Endothelial cell of umbilical vein (primary cell): ENCODE measurements at regions of chr19 and their contacts with region 1.

Region 1: GRCh38 chr19:771332-771785 is 20.4 kb downstream of the MISP start:
- DNase-seq: peak; percentile 49
- H3K4me3 ChIP-seq: no peak overlapping the region
- H3K27ac ChIP-seq: no peak overlapping the region
- H3K4me1 ChIP-seq: no peaks in the 10 kb centered on the region
- H3K27me3 ChIP-seq: no peaks in the 10 kb centered on the region
- CTCF ChIP-seq: peak; percentile 52 to 71
- POLR2A ChIP-seq: no peak

Region 2: DNA sequence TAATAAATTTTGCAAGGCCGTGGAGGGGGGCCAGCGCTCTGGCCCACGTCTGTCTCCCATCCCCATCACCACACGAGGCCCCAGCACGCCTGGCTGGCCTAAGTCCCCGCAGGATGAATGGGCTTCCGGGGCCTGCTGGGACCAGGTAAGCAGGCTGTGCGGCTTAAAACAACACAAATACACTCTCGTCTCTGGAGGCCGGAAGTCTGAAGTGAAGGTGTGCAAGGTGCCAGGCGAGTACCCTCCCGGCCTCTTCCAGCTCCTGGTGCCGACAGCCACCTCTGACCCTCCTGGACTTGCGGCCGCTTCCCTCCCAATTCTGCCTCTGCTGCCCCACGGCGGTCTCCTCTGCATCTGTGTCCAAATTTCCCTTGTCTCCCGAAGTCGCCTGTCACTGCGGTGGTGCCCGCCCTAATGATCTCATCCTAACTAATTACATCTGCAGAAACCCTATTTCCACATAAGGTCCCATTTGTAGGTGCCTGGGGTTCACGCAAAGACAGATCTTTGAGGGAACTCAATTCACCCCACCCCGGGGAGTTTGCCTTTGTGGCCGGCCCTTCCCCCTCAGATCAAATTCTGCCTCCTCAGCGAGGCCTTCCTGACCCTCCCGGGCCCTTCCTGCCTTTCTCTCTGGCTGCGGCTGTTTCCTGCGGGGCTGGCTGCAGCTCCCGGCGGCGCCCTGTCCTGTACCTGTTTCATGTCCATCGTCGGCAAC is 17.8 kb after region 1 on chr19:
- CTCF ChIA-PET with region 1: interaction called, 9 read pairs
- POLR2A ChIA-PET with region 1: no interaction called
- dilution Hi-C with region 1: no loop called
- intact Hi-C with region 1: loop called (anchors 2 kb)
- DNase-seq: peak; percentile 69
- H3K4me3 ChIP-seq: peak overlapping the region in 1 of 3 experiments; percentile 10
- H3K27ac ChIP-seq: peak overlapping the region; percentile 80
- H3K4me1 ChIP-seq: peaks cover 33% of the 10 kb centered on the region
- H3K27me3 ChIP-seq: no peaks in the 10 kb centered on the region
- CTCF ChIP-seq: no peak
- POLR2A ChIP-seq: peak; percentile 24

Region 3: DNA sequence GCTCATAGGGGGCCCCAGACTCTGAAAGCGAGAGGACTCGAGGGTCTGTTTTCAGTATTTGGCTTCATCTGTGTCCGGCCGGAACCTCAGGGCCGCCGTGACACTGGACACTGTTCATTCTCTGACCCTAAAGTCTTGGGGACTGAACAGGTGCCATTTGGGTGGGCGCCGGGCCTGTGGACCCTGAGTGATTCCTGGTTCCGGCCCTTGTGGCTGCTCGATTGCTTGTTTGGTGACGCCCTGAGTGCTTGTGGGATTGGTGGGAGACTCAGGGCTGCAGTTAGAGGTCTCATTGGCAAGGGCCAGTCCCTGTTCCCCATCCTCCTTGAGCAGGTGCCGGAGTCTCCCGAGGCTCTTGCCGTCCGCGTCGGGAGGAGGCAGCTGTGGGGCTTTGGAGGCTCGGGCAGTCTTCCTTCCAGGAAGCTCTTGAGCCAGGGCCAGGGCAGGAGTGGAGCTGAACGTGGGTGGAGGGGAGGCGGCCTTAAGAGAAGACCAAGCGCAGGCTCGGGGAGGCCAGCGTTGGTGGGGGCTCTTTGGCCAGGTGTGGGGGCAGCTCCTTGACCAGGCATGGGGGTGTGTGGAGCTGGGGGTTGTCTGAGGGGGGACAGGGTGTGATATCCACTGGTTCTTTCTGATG is 30.6 kb after region 1 on chr19:
- CTCF ChIA-PET with region 1: interaction called, 32 read pairs
- POLR2A ChIA-PET with region 1: no interaction called
- dilution Hi-C with region 1: no loop called
- intact Hi-C with region 1: loop called (anchors 1 kb)
- DNase-seq: peak; percentile 57
- H3K4me3 ChIP-seq: peak overlapping the region in 2 of 3 experiments; percentile 12 to 28
- H3K27ac ChIP-seq: peak overlapping the region; percentile 13
- H3K4me1 ChIP-seq: peaks cover 35% of the 10 kb centered on the region
- H3K27me3 ChIP-seq: no peaks in the 10 kb centered on the region
- CTCF ChIP-seq: no peak
- POLR2A ChIP-seq: no peak

Region 4: GRCh38 chr19:860481-861101 is 89.2 kb after region 1 on chr19:
- CTCF ChIA-PET with region 1: interaction called, 8 read pairs
- POLR2A ChIA-PET with region 1: no interaction called
- dilution Hi-C with region 1: no loop called
- intact Hi-C with region 1: loop called (anchors 2 kb)
- DNase-seq: no peak
- H3K4me3 ChIP-seq: no peak overlapping the region
- H3K27ac ChIP-seq: no peak overlapping the region
- H3K4me1 ChIP-seq: no peaks in the 10 kb centered on the region
- H3K27me3 ChIP-seq: peaks cover 0 to 2% of the 10 kb centered on the region in 2 experiments
- CTCF ChIP-seq: no peak
- POLR2A ChIP-seq: no peak

Region 5: DNA sequence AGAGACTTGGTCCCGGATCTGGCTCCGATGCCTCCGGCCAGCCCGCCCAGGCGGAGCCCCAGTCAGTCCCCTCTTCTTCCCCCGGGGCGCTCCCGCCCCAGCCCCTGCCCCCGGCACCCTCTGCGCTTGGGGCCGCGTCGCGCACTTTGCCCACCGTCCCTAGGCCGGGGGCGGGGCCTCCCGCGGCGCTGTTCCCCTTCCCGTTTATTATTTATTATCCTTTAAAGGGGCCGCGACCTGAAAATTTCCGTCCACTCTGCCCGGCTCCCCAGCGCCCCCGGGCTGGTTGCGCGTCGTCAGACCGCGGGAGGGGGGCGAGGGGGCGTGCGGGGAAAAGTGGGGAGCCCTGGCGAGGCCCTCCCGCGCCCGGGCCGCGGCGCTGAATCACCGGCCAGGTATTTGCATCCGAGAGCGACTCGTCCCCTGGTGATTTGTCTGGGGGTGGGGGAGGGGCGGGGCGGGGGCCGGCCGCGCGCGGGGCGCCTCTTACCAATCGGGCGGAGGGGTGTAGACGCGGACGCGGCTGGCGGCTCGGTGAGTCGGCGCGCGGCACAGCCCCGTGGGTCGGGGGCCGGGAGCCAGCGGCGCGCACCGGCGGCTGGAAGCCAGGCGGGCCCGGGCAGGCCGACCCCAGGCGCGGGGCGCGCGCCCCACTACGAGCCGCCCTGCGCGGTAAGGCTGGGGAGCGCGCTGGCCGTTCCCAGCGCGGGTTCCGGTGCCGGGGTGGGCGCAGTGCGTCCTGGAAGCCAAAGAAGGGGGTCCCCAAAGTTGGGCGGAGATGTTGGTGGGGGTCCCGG is 154.4 kb after region 1 on chr19 and contains the start of gene ARID3A:
- CTCF ChIA-PET with region 1: interaction called, 7 read pairs
- POLR2A ChIA-PET with region 1: interaction called, 4 read pairs
- dilution Hi-C with region 1: no loop called
- intact Hi-C with region 1: loop called (anchors 1 kb)
- DNase-seq: peak; percentile 79
- H3K4me3 ChIP-seq: peak within 1 kb of the TSS; percentile 69 to 95 (median 85)
- H3K27ac ChIP-seq: peak within 1 kb of the TSS; percentile 86
- H3K4me1 ChIP-seq: peaks cover 6% of the 10 kb centered on the region
- H3K27me3 ChIP-seq: peaks cover 1% of the 10 kb centered on the region in 2 experiments
- CTCF ChIP-seq: no peak
- POLR2A ChIP-seq: no peak
- total RNA-seq, gene ARID3A: 10.8 and 13.2 TPM in 2 replicates